ENCODE measurements at regions of chr17 and their contacts with region 1.

Region 1: DNA sequence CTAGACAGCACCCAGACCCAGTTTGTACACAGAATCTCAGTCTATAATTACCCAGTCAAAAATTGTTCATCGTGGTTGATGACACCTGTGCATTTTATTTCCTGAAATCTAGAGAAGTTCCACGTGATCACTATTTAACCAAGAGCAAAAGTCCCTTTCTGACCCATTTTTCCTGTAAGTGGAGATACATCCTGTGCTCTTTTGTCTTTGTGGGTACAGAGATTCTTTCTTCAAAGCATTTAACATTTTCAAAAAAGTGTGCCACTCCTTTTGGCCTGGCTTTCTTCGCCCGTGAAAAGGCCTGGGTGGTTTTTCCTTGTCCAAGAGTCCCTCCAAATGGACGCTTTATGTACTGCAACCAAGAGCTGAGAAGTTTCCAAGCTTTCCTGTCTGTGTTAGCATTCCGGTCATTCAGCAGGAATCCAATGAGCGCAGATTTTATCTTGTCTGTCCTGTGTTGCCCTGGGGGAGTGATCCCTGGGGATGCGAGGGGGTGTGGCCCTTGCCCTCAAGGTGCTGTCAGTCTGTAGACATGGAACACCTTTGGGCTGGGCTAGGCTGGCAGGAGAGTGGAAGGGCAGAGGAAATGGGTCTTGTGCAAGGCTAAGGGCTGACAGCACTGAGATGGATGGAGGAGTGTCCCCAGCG is 161.1 kb upstream of the CACNG5 start:
- DNase-seq: peak; percentile 72
- ATAC-seq: peak; percentile 74
- H3K4me3 ChIP-seq: no peak overlapping the region
- H3K27ac ChIP-seq: no peak overlapping the region
- H3K4me1 ChIP-seq: peaks cover 19 to 23% of the 10 kb centered on the region in 2 experiments
- H3K27me3 ChIP-seq: no peaks in the 10 kb centered on the region
- CTCF ChIP-seq: peak; percentile 84 to 98 (median 86)
- POLR2A ChIP-seq: no peak
- RAD21 ChIP-seq: peak; percentile 98

Region 2: DNA sequence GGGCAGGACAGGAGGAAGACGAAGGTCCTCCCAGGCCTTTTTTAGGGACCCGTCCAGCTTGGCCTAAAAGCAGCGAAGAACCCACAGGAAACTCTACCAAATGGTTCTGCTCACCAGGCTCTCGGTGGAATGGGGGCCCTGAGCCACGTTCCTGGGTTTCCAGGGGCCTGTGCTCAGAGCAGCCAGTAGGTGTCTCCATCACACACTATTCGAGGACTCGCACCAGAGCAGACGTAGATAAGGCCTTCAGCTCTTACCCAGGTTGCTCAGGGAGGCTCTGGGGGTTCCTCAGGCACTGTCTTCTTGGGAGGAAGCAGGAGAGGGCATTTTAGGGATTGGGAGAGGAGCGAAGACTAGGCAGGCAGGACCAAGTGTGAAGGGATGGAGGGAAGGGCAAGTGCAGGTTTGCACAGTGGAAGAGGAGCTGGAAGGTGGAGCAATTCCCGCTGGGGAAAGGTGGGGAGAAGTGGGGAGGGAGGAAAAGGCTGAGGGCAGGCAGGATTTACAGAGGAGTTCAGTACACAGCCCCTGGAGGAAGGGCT is 1379.5 kb before region 1 on chr17:
- CTCF ChIA-PET with region 1: interaction called, 3 read pairs
- POLR2A ChIA-PET with region 1: no interaction called
- RAD21 ChIA-PET with region 1: no interaction called
- intact Hi-C with region 1: loop called (anchors 10 kb)
- DNase-seq: peak; percentile 72
- ATAC-seq: peak; percentile 100
- H3K4me3 ChIP-seq: no peak overlapping the region
- H3K27ac ChIP-seq: no peak overlapping the region
- H3K4me1 ChIP-seq: peaks cover 4 to 16% of the 10 kb centered on the region in 2 experiments; a peak in 3 of 4 replicates
- H3K27me3 ChIP-seq: no peaks in the 10 kb centered on the region
- CTCF ChIP-seq: peak; percentile 88 to 97 (median 96)
- POLR2A ChIP-seq: no peak
- RAD21 ChIP-seq: peak; percentile 98

Region 3: DNA sequence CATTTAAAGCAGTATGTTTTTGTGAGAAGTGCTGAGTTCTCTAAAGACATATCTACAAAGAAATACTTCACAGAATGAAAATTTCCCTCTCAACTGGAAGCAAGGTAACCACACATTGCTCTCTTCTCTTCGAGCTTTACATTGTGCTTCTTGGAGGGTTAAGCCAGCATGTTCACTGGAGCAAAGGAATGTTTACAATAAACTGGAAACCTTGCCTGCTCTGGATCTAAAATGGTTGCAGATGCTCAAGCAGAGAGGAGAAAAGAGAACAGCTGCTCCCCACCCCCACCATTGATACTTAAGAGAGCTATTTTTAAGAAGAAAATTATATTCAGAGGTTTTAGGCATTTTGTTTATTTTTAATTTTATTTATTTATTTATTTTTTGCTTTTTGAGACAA is 694.9 kb before region 1 on chr17:
- CTCF ChIA-PET with region 1: no interaction called
- POLR2A ChIA-PET with region 1: no interaction called
- RAD21 ChIA-PET with region 1: no interaction called
- intact Hi-C with region 1: no loop called
- DNase-seq: no peak
- ATAC-seq: no peak
- H3K4me3 ChIP-seq: no peak overlapping the region
- H3K27ac ChIP-seq: no peak overlapping the region
- H3K4me1 ChIP-seq: no peaks in the 10 kb centered on the region
- H3K27me3 ChIP-seq: no peaks in the 10 kb centered on the region
- CTCF ChIP-seq: no peak
- POLR2A ChIP-seq: no peak
- RAD21 ChIP-seq: no peak

Region 4: GRCh38 chr17:66255112-66255511 is 418.7 kb before region 1 on chr17:
- CTCF ChIA-PET with region 1: interaction called, 17 read pairs
- POLR2A ChIA-PET with region 1: interaction called, 3 read pairs
- RAD21 ChIA-PET with region 1: interaction called, 6 to 7 read pairs
- intact Hi-C with region 1: loop called (anchors 1 kb)
- DNase-seq: peak; percentile 79
- ATAC-seq: peak; percentile 95
- H3K4me3 ChIP-seq: no peak overlapping the region
- H3K27ac ChIP-seq: no peak overlapping the region
- H3K4me1 ChIP-seq: peaks cover 0 to 4% of the 10 kb centered on the region in 2 experiments; a peak in 1 of 4 replicates
- H3K27me3 ChIP-seq: no peaks in the 10 kb centered on the region; the same call in 1 of the 2 replicates
- CTCF ChIP-seq: peak; percentile 75 to 97 (median 91)
- POLR2A ChIP-seq: no peak
- RAD21 ChIP-seq: peak; percentile 99

Region 5: GRCh38 chr17:66567234-66568170 is 106.3 kb before region 1 on chr17:
- CTCF ChIA-PET with region 1: interaction called, 11 read pairs
- POLR2A ChIA-PET with region 1: no interaction called
- RAD21 ChIA-PET with region 1: interaction called in 1 of 2 experiments, 3 read pairs
- intact Hi-C with region 1: loop called (anchors 2 kb)
- DNase-seq: peak; percentile 71
- ATAC-seq: peak; percentile 97
- H3K4me3 ChIP-seq: no peak overlapping the region
- H3K27ac ChIP-seq: no peak overlapping the region
- H3K4me1 ChIP-seq: peaks cover 14 to 19% of the 10 kb centered on the region in 2 experiments; a peak in 3 of 4 replicates
- H3K27me3 ChIP-seq: no peaks in the 10 kb centered on the region
- CTCF ChIP-seq: peak; percentile 88 to 99 (median 98)
- POLR2A ChIP-seq: no peak
- RAD21 ChIP-seq: peak; percentile 98

Measured in HCT116 (cell line).